Body of pancreas (tissue), 4 donors: ENCODE measurements at regions of chr2 and their contacts with region 1.

Region 1: GRCh38 chr2:190534310-190535120 is at the start of gene NEMP2:
- DNase-seq: peak; percentile 73 to 86 (median 78)
- ATAC-seq: peak; percentile 92
- H3K4me3 ChIP-seq: peak within 1 kb of the TSS; percentile 46 to 81
- H3K27ac ChIP-seq: peak within 1 kb of the TSS; percentile 80 to 95 (median 90)
- H3K4me1 ChIP-seq: peaks cover 11% of the 10 kb centered on the region
- H3K27me3 ChIP-seq: no peaks in the 10 kb centered on the region
- CTCF ChIP-seq: peak in 1 of 7 experiments; percentile 20
- POLR2A ChIP-seq: peak; percentile 70 to 75 (median 72)
- total RNA-seq, gene NEMP2: 3.0 to 3.9 TPM

Region 2: DNA sequence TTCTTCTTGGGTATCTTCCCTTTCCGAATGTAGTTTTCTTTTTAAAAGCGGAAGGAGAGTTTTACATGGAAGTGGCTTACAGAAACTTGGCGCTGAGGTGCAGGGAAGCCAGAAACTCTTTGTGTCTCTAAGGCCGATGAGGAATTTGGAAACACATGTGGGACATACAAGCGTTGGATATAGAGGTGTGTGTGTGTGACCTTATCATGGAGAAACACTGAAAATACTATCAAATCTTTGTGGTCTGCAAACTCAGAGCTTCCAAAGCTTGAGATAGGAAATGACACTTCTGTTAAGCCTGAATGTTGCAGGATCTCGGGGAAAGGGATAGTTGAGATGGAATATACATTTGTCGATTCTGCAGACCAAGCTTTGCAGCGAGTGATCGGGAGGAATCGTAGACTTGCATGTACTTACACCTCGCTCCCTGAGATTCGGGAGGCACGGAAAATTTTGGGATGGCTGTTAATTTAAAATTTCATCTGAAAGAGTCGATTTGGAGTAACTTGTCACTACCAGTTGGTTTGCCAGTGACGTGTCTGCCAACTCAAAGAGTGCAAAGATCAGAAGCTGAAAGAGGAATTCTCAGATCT is 115.4 kb after region 1 on chr2:
- intact Hi-C with region 1: loop called (anchors 10 kb)
- DNase-seq: peak in 1 of 4 donors; percentile 14
- ATAC-seq: no peak
- H3K4me3 ChIP-seq: peak overlapping the region; percentile 26 to 88
- H3K27ac ChIP-seq: peak overlapping the region in 3 of 4 donors; percentile 87 to 94 (median 89)
- H3K4me1 ChIP-seq: peaks cover 14% of the 10 kb centered on the region
- H3K27me3 ChIP-seq: no peaks in the 10 kb centered on the region
- CTCF ChIP-seq: no peak
- POLR2A ChIP-seq: no peak